ENCODE measurements at regions of chr19 and their contacts with region 1.

Region 1: DNA sequence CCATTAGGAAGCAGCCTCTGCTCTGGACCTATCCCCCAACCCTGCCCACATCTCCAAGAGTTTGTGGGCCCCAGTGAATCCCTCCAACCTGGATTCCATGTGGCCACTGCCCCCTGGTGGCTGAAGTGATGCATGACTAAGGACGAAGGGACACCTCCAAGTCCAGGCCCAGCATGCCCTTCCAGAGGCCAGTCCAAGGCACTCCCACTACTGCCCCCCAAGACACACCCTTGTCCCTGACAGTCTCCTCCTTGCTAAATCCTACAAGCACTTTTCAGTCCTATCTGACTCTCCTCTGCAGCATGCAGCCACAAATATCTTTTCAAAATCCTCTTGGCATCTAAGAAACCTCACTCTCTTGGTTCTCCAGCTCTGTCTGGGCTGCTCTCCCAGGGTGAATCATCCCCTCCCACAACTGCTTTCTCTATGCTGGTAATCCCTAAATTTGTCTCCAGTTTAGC is 33.0 kb downstream of the DEDD2 start:
- DNase-seq: peak; percentile 91 to 96
- ATAC-seq: peak; percentile 77 to 94
- H3K4me3 ChIP-seq: no peak overlapping the region
- H3K27ac ChIP-seq: no peak overlapping the region
- H3K4me1 ChIP-seq: no peaks in the 10 kb centered on the region
- CTCF ChIP-seq: peak; percentile 99
- EP300 ChIP-seq: no peak
- POLR2A ChIP-seq: no peak
- RAD21 ChIP-seq: peak; percentile 94 to 98

Region 2: GRCh38 chr19:41837981-41838708 is 346.3 kb before region 1 on chr19:
- CTCF ChIA-PET with region 1: no interaction called
- POLR2A ChIA-PET with region 1: no interaction called
- DNase-seq: no peak
- ATAC-seq: peak; percentile 7 to 20; a peak in 4 of 6 replicates
- H3K4me3 ChIP-seq: no peak overlapping the region
- H3K27ac ChIP-seq: no peak overlapping the region
- H3K4me1 ChIP-seq: no peaks in the 10 kb centered on the region
- CTCF ChIP-seq: no peak
- EP300 ChIP-seq: no peak
- POLR2A ChIP-seq: no peak
- RAD21 ChIP-seq: no peak

Region 3: DNA sequence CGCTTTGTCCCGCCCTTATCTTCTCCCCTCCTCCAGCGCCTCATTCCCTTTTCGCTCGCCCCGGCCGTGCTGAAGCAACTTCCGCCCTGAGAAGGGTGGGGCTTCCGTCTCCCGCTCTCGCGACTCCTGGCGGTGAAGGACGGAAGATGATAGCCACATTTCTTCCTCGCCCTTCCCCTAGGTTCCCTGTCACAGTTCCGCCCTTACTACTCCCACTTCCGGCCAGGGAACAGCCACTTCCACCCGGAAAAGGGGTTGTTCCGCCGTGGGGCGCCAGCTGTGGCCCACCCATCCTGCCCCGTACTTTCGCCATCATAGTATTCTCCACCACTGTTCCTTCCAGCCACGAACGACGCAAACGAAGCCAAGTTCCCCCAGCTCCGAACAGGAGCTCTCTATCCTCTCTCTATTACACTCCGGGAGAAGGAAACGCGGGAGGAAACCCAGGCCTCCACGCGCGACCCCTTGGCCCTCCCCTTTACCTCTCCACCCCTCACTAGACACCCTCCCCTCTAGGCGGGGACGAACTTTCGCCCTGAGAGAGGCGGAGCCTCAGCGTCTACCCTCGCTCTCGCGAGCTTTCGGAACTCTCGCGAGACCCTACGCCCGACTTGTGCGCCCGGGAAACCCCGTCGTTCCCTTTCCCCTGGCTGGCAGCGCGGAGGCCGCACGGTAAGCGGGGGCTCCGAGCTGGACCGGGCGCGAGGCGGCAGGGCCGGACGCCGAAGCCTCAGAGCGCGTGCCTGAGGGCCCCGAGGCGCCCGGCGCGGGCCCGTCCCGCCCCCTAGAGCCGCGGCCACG is 324.6 kb before region 1 on chr19 and contains the start of gene RPS19:
- CTCF ChIA-PET with region 1: no interaction called
- POLR2A ChIA-PET with region 1: no interaction called
- DNase-seq: peak; percentile 100
- ATAC-seq: peak; percentile 86 to 92
- H3K4me3 ChIP-seq: peak within 1 kb of the TSS; percentile 89
- H3K27ac ChIP-seq: peak within 1 kb of the TSS; percentile 90 to 95
- H3K4me1 ChIP-seq: peaks cover 40% of the 10 kb centered on the region
- CTCF ChIP-seq: peak; percentile 56
- EP300 ChIP-seq: peak in 1 of 2 experiments; percentile 13; a peak in 1 of 5 replicates
- POLR2A ChIP-seq: peak; percentile 95
- RAD21 ChIP-seq: no peak; a peak in 1 of 5 replicates
- polyA plus RNA-seq, gene RPS19: 2,749 and 3,564 TPM in 2 replicates

Region 4: GRCh38 chr19:42065051-42065450 is 119.4 kb before region 1 on chr19:
- CTCF ChIA-PET with region 1: no interaction called
- POLR2A ChIA-PET with region 1: no interaction called
- DNase-seq: no peak
- ATAC-seq: no peak
- H3K4me3 ChIP-seq: no peak overlapping the region
- H3K27ac ChIP-seq: no peak overlapping the region
- H3K4me1 ChIP-seq: no peaks in the 10 kb centered on the region
- CTCF ChIP-seq: no peak
- EP300 ChIP-seq: no peak
- POLR2A ChIP-seq: no peak
- RAD21 ChIP-seq: no peak

Region 5: GRCh38 chr19:42092350-42092749 is 92.1 kb before region 1 on chr19:
- CTCF ChIA-PET with region 1: interaction called, 10 read pairs
- POLR2A ChIA-PET with region 1: no interaction called
- DNase-seq: peak; percentile 70 to 81
- ATAC-seq: peak; percentile 59 to 81
- H3K4me3 ChIP-seq: no peak overlapping the region
- H3K27ac ChIP-seq: peak overlapping the region in 1 of 2 experiments; percentile 11; a peak in 1 of 6 replicates
- H3K4me1 ChIP-seq: peaks cover 24% of the 10 kb centered on the region
- CTCF ChIP-seq: peak; percentile 76
- EP300 ChIP-seq: no peak
- POLR2A ChIP-seq: no peak
- RAD21 ChIP-seq: peak; percentile 56 to 82

Region 6: DNA sequence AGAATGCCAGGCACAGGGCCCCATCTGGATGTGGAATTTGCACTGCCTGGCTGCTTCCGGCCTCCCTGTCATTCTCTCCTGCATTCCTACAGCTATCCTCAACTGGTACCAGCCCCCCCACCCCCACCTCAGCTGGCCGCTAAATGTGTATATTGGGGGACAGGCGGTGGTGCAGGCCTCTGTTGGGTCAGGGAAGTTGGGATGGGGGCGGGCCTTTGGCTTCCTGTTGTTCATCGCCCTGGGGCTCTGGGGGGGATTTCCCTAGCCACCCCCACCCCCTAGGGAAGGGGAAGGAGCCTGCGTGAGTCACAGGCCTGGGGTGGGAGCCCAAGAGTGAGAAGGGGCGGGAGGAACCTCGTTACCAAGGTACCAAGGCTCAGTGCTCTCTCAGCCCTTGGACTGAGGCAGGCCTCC is 62.8 kb before region 1 on chr19:
- CTCF ChIA-PET with region 1: interaction called, 213 read pairs
- POLR2A ChIA-PET with region 1: no interaction called
- DNase-seq: peak in 1 of 2 experiments; percentile 66
- ATAC-seq: peak; percentile 10 to 37; a peak in 3 of 6 replicates
- H3K4me3 ChIP-seq: no peak overlapping the region
- H3K27ac ChIP-seq: peak overlapping the region in 1 of 2 experiments; percentile 56; a peak in 3 of 6 replicates
- H3K4me1 ChIP-seq: peaks cover 14% of the 10 kb centered on the region
- CTCF ChIP-seq: no peak
- EP300 ChIP-seq: no peak
- POLR2A ChIP-seq: no peak
- RAD21 ChIP-seq: no peak

Region 7: GRCh38 chr19:42166316-42166715 is 18.1 kb before region 1 on chr19:
- CTCF ChIA-PET with region 1: interaction called, 34 read pairs
- POLR2A ChIA-PET with region 1: no interaction called
- DNase-seq: no peak
- ATAC-seq: no peak
- H3K4me3 ChIP-seq: no peak overlapping the region
- H3K27ac ChIP-seq: no peak overlapping the region
- H3K4me1 ChIP-seq: no peaks in the 10 kb centered on the region
- CTCF ChIP-seq: no peak
- EP300 ChIP-seq: no peak
- POLR2A ChIP-seq: no peak
- RAD21 ChIP-seq: no peak

Region 8: DNA sequence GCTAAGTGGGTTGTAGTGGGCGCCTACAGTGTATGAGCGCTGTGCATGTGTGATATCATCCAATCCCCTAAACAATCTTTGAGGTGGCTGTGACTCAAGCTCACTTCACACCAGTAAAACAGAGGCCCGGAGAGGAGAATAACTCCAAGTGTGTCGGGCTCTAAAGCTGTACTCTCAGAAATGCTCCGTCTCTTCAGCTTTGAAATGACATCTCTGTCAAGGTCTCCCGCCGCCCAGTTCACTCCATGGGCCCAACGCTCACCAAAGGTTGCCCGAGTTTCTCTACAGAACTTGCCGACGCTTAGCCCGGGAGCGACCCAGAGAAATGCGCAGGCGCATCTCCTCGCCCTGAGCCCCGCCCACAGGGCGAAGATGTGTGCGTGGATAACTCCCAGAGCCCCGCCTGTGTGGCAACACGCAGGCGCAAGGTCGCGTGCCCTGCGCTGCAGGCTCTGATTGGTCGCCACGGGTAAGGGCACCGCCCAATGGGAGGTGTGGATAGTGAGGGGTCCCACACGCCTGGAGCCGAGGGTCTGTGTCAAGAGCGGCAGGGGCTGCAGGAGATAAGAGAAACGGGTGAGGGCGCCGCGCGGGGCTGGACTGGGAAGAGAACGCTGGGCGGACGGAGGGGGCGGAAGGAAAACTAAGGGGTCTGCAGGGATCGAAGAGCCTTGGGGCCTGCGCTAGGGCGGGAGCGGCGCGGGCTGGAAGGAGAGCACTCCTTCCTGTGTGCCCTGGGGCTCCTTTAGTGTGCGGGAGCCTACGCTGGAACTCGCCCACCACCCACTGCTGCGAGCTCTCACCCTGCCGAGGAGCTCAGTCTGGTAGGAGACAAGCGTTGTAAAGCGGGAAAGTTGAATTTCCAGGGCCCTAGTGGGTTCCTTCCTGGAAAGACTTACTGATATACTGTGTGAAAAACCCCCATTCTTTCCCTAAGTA is 35.6 kb after region 1 on chr19 and contains the start of gene ZNF526:
- CTCF ChIA-PET with region 1: interaction called, 29 read pairs
- POLR2A ChIA-PET with region 1: no interaction called
- DNase-seq: peak; percentile 100
- ATAC-seq: peak; percentile 81 to 92
- H3K4me3 ChIP-seq: peak within 1 kb of the TSS; percentile 77
- H3K27ac ChIP-seq: peak within 1 kb of the TSS; percentile 85 to 89
- H3K4me1 ChIP-seq: peaks cover 39% of the 10 kb centered on the region
- CTCF ChIP-seq: no peak
- EP300 ChIP-seq: no peak
- POLR2A ChIP-seq: peak; percentile 87
- RAD21 ChIP-seq: no peak
- polyA plus RNA-seq, gene ZNF526: 7.1 and 8.7 TPM in 2 replicates

Region 9: DNA sequence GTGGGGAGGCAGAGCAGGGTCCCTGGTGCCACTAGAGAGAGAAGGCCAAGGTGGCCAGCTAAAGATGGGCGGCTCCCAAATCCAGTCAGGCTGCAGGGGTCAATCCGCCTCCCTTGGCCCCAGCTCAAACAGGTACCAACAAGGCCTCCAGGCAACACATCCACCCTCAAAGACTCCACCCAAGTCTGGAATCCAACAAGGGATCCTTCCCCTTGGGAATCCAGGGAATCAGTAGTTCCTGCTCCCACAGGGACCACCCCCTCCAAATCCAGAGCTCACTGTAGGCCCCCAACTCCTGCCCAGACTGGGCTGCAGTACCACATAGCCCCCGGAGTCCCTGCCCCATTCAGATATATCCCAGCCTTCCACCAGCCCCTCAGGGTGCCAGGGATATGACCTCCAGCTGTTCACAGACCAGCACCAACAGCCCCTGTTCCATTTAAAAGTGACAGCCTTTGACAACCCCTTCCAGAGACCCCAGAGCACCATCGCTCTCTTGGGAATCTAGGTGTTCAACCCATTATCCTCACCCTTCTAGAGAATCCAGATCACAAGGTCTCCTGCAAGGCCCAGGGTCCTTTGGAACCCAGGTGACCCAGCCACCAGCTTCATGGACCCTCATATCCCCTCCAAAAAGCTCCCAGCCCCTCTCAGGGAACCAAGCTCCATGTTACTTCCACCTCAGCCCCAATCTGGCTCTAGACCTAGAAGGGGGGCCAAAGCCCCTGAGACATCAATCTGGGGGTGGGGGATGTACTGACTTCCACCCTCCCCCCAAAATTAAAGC is 67.3 kb after region 1 on chr19:
- CTCF ChIA-PET with region 1: no interaction called
- POLR2A ChIA-PET with region 1: no interaction called
- DNase-seq: peak in 1 of 2 experiments; percentile 50
- ATAC-seq: no peak
- H3K4me3 ChIP-seq: peak overlapping the region; percentile 94
- H3K27ac ChIP-seq: peak overlapping the region; percentile 94 to 96
- H3K4me1 ChIP-seq: peaks cover 68% of the 10 kb centered on the region
- CTCF ChIP-seq: no peak
- EP300 ChIP-seq: no peak
- POLR2A ChIP-seq: no peak
- RAD21 ChIP-seq: no peak

Measured in A549 (cell line).